Aorta (tissue), 5 donors: ENCODE measurements at regions of chr9 and their contacts with region 1.

Region 1: DNA sequence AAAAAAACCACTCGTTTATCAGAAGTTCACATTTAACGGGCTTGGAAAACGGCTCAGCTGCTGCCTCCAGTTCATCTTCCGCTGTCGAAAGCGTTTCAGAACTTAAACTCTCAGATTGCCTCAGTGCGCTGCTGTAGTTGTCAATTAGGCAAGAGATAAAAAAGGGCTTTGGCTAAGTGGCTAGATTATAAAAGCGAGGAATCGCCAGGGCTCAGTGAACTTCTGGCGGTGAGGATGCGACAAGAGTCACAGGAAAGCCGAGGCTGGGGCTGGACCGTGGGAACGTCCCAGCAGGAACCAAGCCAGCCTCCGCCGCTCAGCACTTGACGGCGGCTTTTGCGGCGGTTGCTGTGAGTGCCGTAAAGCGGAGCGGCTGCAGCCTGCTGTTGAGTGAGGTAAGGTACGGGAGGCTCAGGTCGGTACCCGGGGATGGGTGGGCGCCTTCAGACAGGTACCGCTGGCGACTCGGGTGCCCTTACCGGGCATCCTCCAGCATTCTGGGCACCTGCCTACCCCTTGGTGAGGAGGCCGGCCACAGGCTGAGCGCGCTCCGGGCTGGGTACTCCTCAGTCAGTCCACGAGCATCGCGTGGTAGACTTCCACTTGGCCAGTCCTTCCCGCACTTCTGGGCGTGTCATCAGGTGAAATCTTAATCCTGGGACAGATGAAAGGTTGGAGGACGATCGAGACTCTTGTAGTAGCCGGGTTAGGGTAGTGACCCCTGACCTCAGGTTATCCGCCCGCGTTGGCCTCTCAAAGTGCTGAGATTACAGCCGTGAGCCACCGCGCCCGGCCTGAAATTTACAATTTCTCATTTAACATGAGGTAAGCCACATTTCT is at the start of gene FKTN:
- DNase-seq: peak; percentile 92 to 96
- ATAC-seq: peak; percentile 98
- H3K4me3 ChIP-seq: peak within 1 kb of the TSS; percentile 52 to 79
- H3K27ac ChIP-seq: peak within 1 kb of the TSS in 1 of 2 donors; percentile 21
- H3K4me1 ChIP-seq: peaks cover 0 to 4% of the 10 kb centered on the region in 2 donors
- H3K27me3 ChIP-seq: no peaks in the 10 kb centered on the region
- total RNA-seq, gene FKTN: 15.5 to 16.9 TPM

Region 2: DNA sequence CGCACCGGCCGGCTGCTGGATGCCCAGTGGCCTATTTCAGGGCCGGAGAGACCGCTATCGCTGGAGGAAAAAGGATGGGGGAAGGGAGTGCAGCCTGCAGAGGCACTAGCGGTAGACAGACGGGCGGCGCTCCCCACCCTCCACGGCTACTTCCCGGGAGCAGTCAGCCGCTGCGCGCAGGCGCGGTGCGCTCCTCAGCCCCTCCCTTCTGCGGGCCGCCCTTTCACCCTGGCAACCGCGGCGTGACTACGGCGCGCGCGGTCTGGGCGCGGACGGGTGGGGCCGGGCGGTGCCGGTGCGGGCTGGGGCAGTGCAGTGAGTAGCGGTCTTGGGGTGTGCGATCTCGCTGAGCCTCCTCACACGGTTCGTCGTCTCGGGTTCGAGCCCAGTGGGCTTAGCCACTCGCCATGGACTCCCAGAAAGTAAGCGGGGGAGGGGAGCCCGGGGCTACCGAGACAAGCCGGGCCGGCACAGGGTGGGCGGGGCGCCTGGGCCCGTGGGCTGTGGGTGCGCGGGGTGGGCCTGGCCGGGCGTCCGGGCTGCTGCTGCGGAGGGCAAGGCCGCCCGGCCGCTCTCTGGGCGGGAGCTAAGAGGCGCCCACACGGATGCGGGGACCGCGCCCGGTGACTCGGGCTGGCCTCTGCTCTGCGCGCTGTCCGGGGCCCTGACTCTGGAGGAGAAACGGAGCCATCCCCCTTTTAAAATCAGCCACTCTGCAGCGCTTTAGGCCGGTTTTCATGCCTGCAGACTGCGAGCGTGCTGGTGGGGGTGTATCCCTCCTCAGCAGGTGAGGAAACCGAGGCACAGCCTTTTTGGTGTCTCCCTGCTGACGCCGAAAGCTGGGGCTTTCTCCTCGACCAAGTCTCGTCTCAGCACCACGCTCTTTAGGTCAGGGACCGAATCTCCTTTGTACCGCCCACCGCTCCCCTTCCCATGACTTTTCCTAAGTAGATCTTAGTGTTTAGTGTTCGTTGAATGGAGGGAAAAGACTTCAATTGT is 109.9 kb before region 1 on chr9 and contains the start of gene FSD1L:
- intact Hi-C with region 1: loop called in 1 of 2 experiments (anchors 5 kb)
- DNase-seq: peak; percentile 97 to 98
- ATAC-seq: peak; percentile 97
- H3K4me3 ChIP-seq: peak within 1 kb of the TSS; percentile 42 to 81
- H3K27ac ChIP-seq: no peak within 1 kb of the TSS
- H3K4me1 ChIP-seq: no peaks in the 10 kb centered on the region
- H3K27me3 ChIP-seq: no peaks in the 10 kb centered on the region
- total RNA-seq, gene FSD1L: 4.6 to 6.9 TPM

Region 3: DNA sequence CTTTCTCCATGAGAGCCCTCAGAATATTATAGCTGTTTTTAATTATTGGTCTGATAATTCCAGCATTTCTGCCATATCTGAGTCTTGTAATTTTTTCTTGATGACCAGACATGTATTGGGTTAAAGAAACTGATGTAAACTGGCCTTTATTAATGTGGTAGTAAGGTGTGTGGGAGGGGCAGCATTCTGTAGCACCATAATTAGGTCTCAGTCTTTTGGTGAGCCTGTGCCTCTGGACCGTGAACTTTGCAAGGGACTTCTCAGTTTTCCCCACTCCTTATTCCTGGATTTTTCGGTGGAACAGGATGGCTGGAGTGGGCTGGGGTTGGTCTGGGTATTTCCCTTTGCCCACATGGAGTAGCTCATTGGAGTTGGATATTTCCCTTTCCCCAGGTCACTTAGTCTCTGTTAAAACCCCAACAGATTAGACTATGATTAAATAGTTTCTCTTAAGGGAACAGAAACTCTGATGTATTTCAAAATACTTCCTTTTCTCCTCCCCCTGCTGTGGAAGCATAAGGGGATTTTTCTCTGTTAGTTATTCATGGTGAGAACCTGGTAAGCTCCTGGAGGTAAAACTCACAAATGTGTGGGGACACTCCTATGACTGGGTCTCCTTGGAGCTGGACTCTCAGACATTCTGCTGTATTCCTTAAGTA is 57.8 kb before region 1 on chr9:
- intact Hi-C with region 1: no loop called
- DNase-seq: no peak
- ATAC-seq: no peak
- H3K4me3 ChIP-seq: no peak overlapping the region
- H3K27ac ChIP-seq: no peak overlapping the region
- H3K4me1 ChIP-seq: no peaks in the 10 kb centered on the region
- H3K27me3 ChIP-seq: no peaks in the 10 kb centered on the region

Region 4: DNA sequence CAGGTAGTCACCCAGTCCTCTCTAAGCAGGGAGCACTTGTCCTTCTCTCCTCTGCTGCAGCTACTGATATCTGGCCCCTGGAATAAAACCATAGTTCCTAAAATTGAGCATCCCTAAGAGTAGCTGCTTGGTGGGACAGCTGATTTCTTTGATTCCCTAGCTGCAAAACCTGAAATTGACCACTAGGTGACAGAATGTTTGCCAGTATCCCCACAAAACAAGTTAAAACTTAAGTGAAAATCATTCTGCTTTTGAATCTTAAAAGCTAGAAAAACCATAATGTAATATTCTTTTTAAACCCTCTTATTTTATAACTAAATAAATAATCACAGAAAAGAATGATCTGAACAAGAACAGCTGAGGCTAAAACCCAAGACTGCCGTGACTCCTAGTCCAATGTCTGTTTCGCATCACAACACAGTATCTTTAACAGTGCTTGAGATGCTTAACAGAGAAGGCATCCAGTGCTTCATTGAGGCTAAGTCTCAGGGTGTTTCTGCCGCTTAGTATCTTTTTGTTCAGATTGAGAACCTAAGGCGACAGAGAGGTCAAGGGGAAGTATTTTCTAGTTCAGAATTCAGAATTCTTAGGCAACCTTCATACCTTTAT is 79.9 kb after region 1 on chr9:
- intact Hi-C with region 1: no loop called
- DNase-seq: no peak
- ATAC-seq: no peak
- H3K4me3 ChIP-seq: no peak overlapping the region
- H3K27ac ChIP-seq: no peak overlapping the region
- H3K4me1 ChIP-seq: no peaks in the 10 kb centered on the region
- H3K27me3 ChIP-seq: no peaks in the 10 kb centered on the region

Region 5: GRCh38 chr9:106143781-106144180 is 585.8 kb after region 1 on chr9:
- intact Hi-C with region 1: no loop called
- DNase-seq: no peak
- ATAC-seq: no peak
- H3K4me3 ChIP-seq: no peak overlapping the region
- H3K27ac ChIP-seq: no peak overlapping the region
- H3K4me1 ChIP-seq: no peaks in the 10 kb centered on the region
- H3K27me3 ChIP-seq: no peaks in the 10 kb centered on the region